CD4-positive, alpha-beta memory T cell (primary cell): ENCODE measurements at regions of chr1 and their contacts with region 1.

Region 1: GRCh38 chr1:39845275-39846116 is 37.8 kb downstream of the TRIT1 start:
- DNase-seq: peak; percentile 86 to 96 (median 90)
- H3K4me3 ChIP-seq: no peak overlapping the region
- H3K4me3 Mint-ChIP-seq: peak overlapping the region; percentile 55 to 88 (median 67)
- H3K27ac ChIP-seq: peak overlapping the region; percentile 68
- H3K27ac Mint-ChIP-seq: peak overlapping the region; percentile 92 to 97 (median 93)
- H3K4me1 ChIP-seq: peaks cover 56% of the 10 kb centered on the region
- H3K4me1 Mint-ChIP-seq: peaks cover 46 to 64% (median 52%) of the 10 kb centered on the region in 4 donors
- H3K27me3 ChIP-seq: no peaks in the 10 kb centered on the region
- H3K27me3 Mint-ChIP-seq: no peaks in the 10 kb centered on the region

Region 2: DNA sequence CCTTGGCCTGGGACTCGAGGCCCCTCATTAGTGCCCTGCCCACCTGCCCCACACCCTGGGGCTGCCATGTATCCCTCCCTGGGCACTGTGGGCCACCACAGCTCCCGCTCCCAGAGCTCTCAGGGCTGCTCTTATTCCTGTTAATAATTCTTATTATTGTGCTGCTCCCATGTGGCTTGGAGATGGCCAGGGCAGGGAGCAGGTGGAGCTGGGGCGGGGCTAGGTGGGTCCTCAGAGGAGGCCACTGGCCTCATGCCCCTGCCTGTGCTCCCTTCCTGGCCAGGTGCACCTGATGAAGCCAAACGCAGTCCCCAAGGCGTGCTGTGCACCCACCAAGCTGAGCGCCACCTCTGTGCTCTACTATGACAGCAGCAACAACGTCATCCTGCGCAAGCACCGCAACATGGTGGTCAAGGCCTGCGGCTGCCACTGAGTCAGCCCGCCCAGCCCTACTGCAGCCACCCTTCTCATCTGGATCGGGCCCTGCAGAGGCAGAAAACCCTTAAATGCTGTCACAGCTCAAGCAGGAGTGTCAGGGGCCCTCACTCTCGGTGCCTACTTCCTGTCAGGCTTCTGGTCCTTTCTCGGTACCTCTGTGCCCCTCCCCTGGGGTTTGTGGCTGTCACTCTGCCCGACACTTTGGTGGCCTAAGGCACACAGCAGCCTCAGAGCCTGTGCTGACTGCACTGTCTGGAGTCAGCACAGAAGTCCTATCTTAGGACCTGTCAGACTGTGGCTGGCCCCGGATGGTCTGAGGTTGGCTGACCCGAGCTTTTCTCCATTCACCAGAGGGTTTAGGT is 319.9 kb before region 1 on chr1:
- CTCF ChIA-PET with region 1: no interaction called
- POLR2A ChIA-PET with region 1: no interaction called
- intact Hi-C with region 1: no loop called
- DNase-seq: peak in 1 of 5 donors; percentile 27
- H3K4me3 ChIP-seq: no peak overlapping the region
- H3K4me3 Mint-ChIP-seq: no peak overlapping the region
- H3K27ac ChIP-seq: no peak overlapping the region
- H3K27ac Mint-ChIP-seq: peak overlapping the region in 1 of 7 donors; percentile 22
- H3K4me1 ChIP-seq: peaks cover 6% of the 10 kb centered on the region
- H3K4me1 Mint-ChIP-seq: peaks cover 0 to 7% (median 4%) of the 10 kb centered on the region in 4 donors
- H3K27me3 ChIP-seq: no peaks in the 10 kb centered on the region
- H3K27me3 Mint-ChIP-seq: no peaks in the 10 kb centered on the region

Region 3: DNA sequence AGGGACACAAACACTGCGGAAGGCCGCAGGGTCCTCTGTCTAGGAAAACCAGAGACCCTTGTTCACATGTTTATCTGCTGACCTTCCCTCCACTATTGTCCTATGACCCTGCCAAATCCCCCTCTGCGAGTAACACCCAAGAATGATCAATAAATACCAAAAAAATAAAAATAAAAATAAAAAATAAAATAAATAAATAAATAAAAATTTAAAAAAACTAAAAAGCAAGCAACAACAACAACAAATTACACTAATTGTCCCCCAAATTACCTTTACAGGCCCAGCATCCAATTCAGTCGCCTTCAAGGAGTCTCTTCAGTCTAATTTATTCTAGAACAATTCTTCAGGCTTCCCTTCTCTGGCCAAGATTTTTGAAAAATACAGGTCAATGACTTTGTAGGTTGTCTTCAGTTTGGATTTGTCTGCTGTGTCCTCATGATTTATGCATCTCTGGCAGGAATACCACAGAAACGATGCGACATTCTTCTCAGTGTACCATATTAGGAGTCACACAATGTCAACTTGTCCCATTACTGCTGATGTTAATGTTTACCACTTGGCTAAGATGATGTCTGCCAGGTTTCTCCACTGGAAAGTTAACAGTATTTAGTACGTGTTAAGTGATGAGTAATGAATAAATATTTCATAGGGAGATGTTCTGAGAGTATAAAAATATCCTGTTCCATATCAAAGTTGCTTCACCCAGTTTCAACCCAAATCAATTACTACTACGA is 36.5 kb before region 1 on chr1:
- CTCF ChIA-PET with region 1: no interaction called
- POLR2A ChIA-PET with region 1: no interaction called
- intact Hi-C with region 1: no loop called
- DNase-seq: no peak
- H3K4me3 ChIP-seq: no peak overlapping the region
- H3K4me3 Mint-ChIP-seq: no peak overlapping the region
- H3K27ac ChIP-seq: no peak overlapping the region
- H3K27ac Mint-ChIP-seq: no peak overlapping the region
- H3K4me1 ChIP-seq: no peaks in the 10 kb centered on the region
- H3K4me1 Mint-ChIP-seq: peaks cover 0 to 1% (median 0%) of the 10 kb centered on the region in 4 donors
- H3K27me3 ChIP-seq: no peaks in the 10 kb centered on the region
- H3K27me3 Mint-ChIP-seq: peaks cover 0 to 3% of the 10 kb centered on the region in 2 donors

Region 4: GRCh38 chr1:39886757-39887231 is 41.3 kb after region 1 on chr1:
- CTCF ChIA-PET with region 1: interaction called, 3 read pairs
- POLR2A ChIA-PET with region 1: interaction called, 4 read pairs
- intact Hi-C with region 1: loop called (anchors 5 kb)
- DNase-seq: no peak
- H3K4me3 ChIP-seq: no peak overlapping the region
- H3K4me3 Mint-ChIP-seq: no peak overlapping the region
- H3K27ac ChIP-seq: no peak overlapping the region
- H3K27ac Mint-ChIP-seq: no peak overlapping the region
- H3K4me1 ChIP-seq: peaks cover 12% of the 10 kb centered on the region
- H3K4me1 Mint-ChIP-seq: peaks cover 10 to 18% (median 15%) of the 10 kb centered on the region in 4 donors
- H3K27me3 ChIP-seq: no peaks in the 10 kb centered on the region
- H3K27me3 Mint-ChIP-seq: peaks cover 1 to 4% of the 10 kb centered on the region in 2 donors

Region 5: DNA sequence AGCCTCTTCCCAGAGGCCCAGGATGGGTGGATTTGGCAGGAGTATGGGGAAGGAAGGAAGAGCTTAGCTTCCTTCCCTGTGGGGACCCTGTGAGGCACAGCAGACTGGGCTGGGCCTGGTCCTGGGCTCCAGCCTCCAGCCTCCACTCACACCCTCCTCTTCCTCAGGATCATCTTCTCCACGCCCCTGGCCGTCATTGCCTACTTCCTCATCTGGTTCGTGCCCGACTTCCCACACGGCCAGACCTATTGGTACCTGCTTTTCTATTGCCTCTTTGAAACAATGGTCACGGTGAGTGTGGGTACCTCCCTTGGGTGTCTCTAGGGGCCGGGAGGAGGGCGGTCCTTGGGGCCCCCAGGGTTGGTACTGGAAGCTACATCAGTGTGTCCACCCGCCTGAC is 119.5 kb after region 1 on chr1:
- CTCF ChIA-PET with region 1: no interaction called
- POLR2A ChIA-PET with region 1: no interaction called
- intact Hi-C with region 1: no loop called
- DNase-seq: no peak
- H3K4me3 ChIP-seq: no peak overlapping the region
- H3K4me3 Mint-ChIP-seq: no peak overlapping the region
- H3K27ac ChIP-seq: no peak overlapping the region
- H3K27ac Mint-ChIP-seq: peak overlapping the region in 1 of 7 donors; percentile 17
- H3K4me1 ChIP-seq: peaks cover 4% of the 10 kb centered on the region
- H3K4me1 Mint-ChIP-seq: peaks cover 0 to 7% (median 0%) of the 10 kb centered on the region in 4 donors
- H3K27me3 ChIP-seq: no peaks in the 10 kb centered on the region
- H3K27me3 Mint-ChIP-seq: no peaks in the 10 kb centered on the region

Region 6: GRCh38 chr1:40096977-40097782 is 251.7 kb after region 1 on chr1 and contains the start of gene PPT1:
- CTCF ChIA-PET with region 1: no interaction called
- POLR2A ChIA-PET with region 1: no interaction called
- intact Hi-C with region 1: no loop called
- DNase-seq: peak; percentile 73 to 82 (median 79)
- H3K4me3 ChIP-seq: peak within 1 kb of the TSS; percentile 81 to 91
- H3K4me3 Mint-ChIP-seq: peak within 1 kb of the TSS; percentile 90 to 99 (median 96)
- H3K27ac ChIP-seq: peak within 1 kb of the TSS; percentile 47
- H3K27ac Mint-ChIP-seq: peak within 1 kb of the TSS; percentile 83 to 98 (median 97)
- H3K4me1 ChIP-seq: peaks cover 19% of the 10 kb centered on the region
- H3K4me1 Mint-ChIP-seq: peaks cover 33 to 40% (median 35%) of the 10 kb centered on the region in 4 donors
- H3K27me3 ChIP-seq: no peaks in the 10 kb centered on the region
- H3K27me3 Mint-ChIP-seq: peaks cover 0 to 7% of the 10 kb centered on the region in 2 donors
- total RNA-seq, gene PPT1: 56.7 to 64.8 TPM